Pancreas (tissue), 10 donors: ENCODE measurements at regions of chr17 and their contacts with region 1.

Region 1: GRCh38 chr17:27473748-27474609 is 17.7 kb downstream of the KSR1 start:
- DNase-seq: peak in 5 of 6 donors; percentile 65 to 77 (median 67)
- ATAC-seq: peak; percentile 65 to 83 (median 78)
- H3K4me3 ChIP-seq: no peak overlapping the region
- H3K27ac ChIP-seq: peak overlapping the region in 3 of 4 donors; percentile 28 to 65 (median 65)
- H3K4me1 ChIP-seq: peaks cover 12 to 22% (median 15%) of the 10 kb centered on the region in 3 donors
- H3K27me3 ChIP-seq: no peaks in the 10 kb centered on the region
- CTCF ChIP-seq: no peak

Region 2: GRCh38 chr17:27367121-27367991 is 106.6 kb before region 1 on chr17:
- intact Hi-C with region 1: no loop called
- DNase-seq: no peak
- ATAC-seq: no peak
- H3K4me3 ChIP-seq: no peak overlapping the region
- H3K27ac ChIP-seq: no peak overlapping the region
- H3K4me1 ChIP-seq: no peaks in the 10 kb centered on the region
- H3K27me3 ChIP-seq: no peaks in the 10 kb centered on the region
- CTCF ChIP-seq: no peak

Region 3: DNA sequence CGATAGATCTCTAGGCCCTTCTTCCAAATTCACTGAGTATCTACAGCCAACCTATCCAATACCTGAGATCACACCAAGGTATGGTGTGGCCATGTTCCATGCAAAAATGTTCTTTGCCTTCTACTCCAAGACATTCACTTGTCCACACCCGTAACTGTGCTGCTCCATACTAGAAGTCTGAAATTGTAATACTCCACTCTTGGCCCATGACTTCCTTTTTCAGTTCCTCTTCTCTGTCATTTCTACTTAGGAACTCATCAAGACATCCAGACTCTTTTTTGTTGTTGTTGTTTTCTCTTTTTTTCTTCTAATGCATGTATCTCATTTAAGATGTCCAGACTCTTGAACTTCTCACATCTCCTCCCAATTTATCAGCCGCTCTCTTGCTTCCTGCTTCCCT is 60.2 kb before region 1 on chr17:
- intact Hi-C with region 1: loop called in 1 of 3 experiments (anchors 10 kb)
- DNase-seq: no peak
- ATAC-seq: peak in 1 of 4 donors; percentile 51
- H3K4me3 ChIP-seq: no peak overlapping the region
- H3K27ac ChIP-seq: no peak overlapping the region
- H3K4me1 ChIP-seq: peaks cover 0 to 1% (median 0%) of the 10 kb centered on the region in 3 donors
- H3K27me3 ChIP-seq: no peaks in the 10 kb centered on the region
- CTCF ChIP-seq: no peak

Region 4: DNA sequence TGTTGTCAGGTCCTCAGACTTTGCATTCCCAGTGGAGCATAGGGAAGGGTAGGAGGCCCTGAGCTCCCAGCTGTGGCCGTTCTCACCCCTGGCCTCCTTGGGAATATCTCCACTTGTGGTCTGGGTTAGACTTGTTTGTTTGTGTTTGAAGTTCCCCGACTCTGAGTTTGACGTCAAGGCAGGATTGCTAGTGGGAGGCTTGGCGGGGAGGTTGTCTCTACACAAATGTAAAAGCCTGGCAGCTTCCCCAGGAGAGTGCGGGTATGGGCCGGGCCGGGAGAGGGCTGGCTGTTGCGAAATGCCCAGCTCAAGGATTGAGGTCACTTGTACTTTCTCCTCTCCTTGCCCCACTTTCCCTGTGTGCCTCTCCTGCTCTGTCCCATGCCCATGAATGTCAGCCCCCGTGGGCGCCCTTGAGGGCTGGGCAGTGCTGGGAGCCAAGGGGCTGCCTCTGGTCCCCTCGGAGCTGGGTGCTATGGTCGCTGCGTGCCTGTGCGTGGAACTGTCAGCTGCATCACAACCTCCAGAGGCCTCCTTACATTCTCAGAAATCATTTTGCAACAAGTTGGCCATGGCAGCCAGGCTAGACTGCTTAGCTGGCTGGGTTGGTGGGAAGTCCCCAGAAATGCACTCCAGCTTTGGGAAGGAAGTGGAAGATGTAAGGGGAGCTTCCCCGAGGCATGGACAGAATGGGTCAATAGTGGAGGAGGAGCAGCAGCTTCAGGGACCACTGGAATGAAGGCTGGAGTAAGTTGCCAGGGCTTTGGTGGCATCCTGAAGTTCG is 66.5 kb after region 1 on chr17:
- intact Hi-C with region 1: no loop called
- DNase-seq: peak; percentile 84 to 98 (median 96)
- ATAC-seq: peak; percentile 81 to 91 (median 87)
- H3K4me3 ChIP-seq: peak overlapping the region in 1 of 4 donors; percentile 28
- H3K27ac ChIP-seq: peak overlapping the region; percentile 88 to 95 (median 90)
- H3K4me1 ChIP-seq: peaks cover 69 to 90% (median 82%) of the 10 kb centered on the region in 3 donors
- H3K27me3 ChIP-seq: no peaks in the 10 kb centered on the region
- CTCF ChIP-seq: no peak